IMR-90 (cell line): ENCODE measurements at regions of chr6 and their contacts with region 1.

Region 1: DNA sequence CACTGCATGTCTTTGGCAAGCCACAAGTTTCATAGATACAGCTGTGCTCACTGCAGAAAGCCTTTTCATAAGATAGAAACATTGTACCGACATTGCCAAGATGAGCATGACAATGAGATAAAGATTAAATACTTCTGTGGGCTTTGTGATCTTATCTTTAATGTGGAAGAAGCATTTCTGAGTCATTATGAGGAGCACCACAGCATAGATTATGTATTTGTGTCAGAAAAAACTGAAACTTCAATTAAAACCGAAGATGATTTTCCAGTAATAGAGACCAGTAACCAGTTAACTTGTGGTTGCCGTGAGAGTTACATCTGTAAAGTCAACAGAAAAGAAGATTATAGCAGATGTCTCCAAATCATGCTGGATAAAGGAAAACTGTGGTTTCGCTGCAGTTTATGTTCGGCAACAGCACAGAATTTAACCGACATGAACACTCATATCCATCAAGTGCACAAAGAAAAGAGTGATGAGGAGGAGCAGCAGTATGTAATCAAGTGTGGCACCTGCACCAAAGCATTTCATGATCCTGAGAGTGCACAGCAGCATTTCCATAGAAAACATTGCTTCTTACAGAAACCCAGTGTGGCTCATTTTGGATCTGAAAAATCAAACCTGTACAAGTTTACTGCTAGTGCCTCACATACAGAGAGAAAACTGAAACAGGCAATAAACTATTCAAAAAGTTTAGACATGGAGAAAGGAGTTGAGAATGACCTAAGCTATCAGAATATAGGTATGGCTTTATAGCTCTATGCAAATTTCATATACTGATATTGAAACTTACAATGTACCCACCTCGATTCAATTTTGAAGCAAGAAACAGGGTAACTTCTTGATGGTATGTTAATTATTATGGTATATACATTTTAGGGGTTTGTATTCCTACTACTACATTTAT is 23.9 kb upstream of the BAG2 start:
- DNase-seq: no peak
- ATAC-seq: no peak
- H3K4me3 ChIP-seq: no peak overlapping the region
- H3K27ac ChIP-seq: no peak overlapping the region
- H3K4me1 ChIP-seq: no peaks in the 10 kb centered on the region
- H3K27me3 ChIP-seq: no peaks in the 10 kb centered on the region
- CTCF ChIP-seq: no peak
- POLR2A ChIP-seq: no peak
- RAD21 ChIP-seq: no peak

Region 2: DNA sequence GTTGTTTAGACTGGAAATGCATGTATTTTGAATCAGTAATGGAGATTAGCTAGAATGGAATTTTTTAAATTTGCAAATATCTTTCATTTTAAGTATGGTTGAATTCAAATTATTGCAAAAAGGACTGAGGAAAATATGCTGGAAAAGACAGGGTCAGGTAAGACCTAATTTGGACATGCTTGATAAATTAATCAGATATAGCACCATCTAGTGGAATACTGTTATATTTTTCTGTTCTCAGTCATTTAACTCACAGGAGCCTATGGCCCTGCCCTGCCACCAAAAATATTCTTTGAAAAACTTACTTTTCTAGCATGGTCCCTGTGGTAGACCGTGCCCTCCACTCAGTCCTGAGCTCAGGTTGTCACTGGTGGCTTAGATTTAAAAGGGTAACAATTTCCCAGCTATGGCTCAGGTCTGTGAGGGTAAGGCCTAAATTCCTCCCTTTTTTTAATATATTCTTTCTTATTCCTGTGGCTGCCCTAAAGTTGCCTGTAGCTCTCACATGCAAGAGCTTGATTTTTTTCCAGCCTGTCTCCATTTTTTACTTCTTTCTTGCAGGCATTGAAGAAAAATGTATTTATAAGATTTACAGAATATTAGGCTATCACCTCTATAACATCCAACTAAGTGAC is 127.0 kb before region 1 on chr6:
- CTCF ChIA-PET with region 1: no interaction called
- POLR2A ChIA-PET with region 1: interaction called, 15 read pairs
- dilution Hi-C with region 1: no loop called
- in situ Hi-C with region 1: no loop called
- intact Hi-C with region 1: no loop called
- DNase-seq: peak; percentile 64
- ATAC-seq: peak; percentile 91
- H3K4me3 ChIP-seq: no peak overlapping the region
- H3K27ac ChIP-seq: no peak overlapping the region
- H3K4me1 ChIP-seq: no peaks in the 10 kb centered on the region
- H3K27me3 ChIP-seq: no peaks in the 10 kb centered on the region
- CTCF ChIP-seq: peak; percentile 58
- POLR2A ChIP-seq: no peak
- RAD21 ChIP-seq: peak; percentile 50

Region 3: GRCh38 chr6:57109880-57110279 is 38.3 kb before region 1 on chr6:
- CTCF ChIA-PET with region 1: no interaction called
- POLR2A ChIA-PET with region 1: no interaction called
- dilution Hi-C with region 1: no loop called
- in situ Hi-C with region 1: no loop called
- intact Hi-C with region 1: loop called (anchors 5 kb)
- DNase-seq: peak; percentile 73
- ATAC-seq: peak; percentile 57
- H3K4me3 ChIP-seq: no peak overlapping the region
- H3K27ac ChIP-seq: no peak overlapping the region
- H3K4me1 ChIP-seq: 0 out of 2 replicates have a peak, but pooled peaks cover 3% of the 10 kb centered on the region
- H3K27me3 ChIP-seq: no peaks in the 10 kb centered on the region
- CTCF ChIP-seq: no peak
- POLR2A ChIP-seq: no peak
- RAD21 ChIP-seq: no peak